Aorta (tissue), 5 donors: ENCODE measurements at regions of chr1 and their contacts with region 1.

Region 1: GRCh38 chr1:219385786-219386427 is 212.2 kb downstream of the LYPLAL1 start:
- DNase-seq: peak in 1 of 2 donors; percentile 51
- ATAC-seq: no peak
- H3K4me3 ChIP-seq: no peak overlapping the region
- H3K27ac ChIP-seq: no peak overlapping the region
- H3K4me1 ChIP-seq: peaks cover 0 to 2% of the 10 kb centered on the region in 2 donors
- H3K27me3 ChIP-seq: no peaks in the 10 kb centered on the region

Region 2: DNA sequence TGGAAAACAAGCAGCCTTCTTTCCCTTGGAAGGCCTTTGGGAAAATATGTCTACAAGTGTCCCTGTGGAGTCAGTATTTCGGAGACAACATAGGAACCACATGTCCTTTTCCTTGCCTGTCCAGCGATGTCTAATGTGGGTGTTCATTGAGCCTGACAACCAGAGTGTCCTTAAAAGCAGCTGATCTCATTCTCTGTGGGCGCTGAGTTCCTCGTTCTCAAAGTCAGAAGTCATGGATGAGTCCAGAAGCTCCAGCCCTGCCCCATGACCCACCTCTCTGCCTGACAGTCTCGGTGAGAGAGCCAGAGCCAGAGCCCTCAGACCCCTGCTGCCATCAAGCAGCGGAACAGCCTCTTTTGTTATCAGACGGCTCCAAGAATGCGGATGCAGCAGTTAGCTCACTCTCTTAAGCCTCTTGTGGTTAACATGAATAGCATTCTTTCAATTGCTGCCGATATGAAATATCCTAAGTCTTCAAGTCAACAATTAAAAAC is 711.6 kb before region 1 on chr1:
- intact Hi-C with region 1: loop called in 1 of 2 experiments (anchors 5 kb)
- DNase-seq: peak; percentile 33 to 56
- ATAC-seq: no peak
- H3K4me3 ChIP-seq: peak overlapping the region in 1 of 2 donors; percentile 41
- H3K27ac ChIP-seq: no peak overlapping the region
- H3K4me1 ChIP-seq: no peaks in the 10 kb centered on the region
- H3K27me3 ChIP-seq: no peaks in the 10 kb centered on the region

Region 3: GRCh38 chr1:219209578-219209977 is 176.3 kb before region 1 on chr1:
- intact Hi-C with region 1: loop called (anchors 5 to 10 kb)
- DNase-seq: no peak
- ATAC-seq: no peak
- H3K4me3 ChIP-seq: no peak overlapping the region
- H3K27ac ChIP-seq: no peak overlapping the region
- H3K4me1 ChIP-seq: no peaks in the 10 kb centered on the region
- H3K27me3 ChIP-seq: no peaks in the 10 kb centered on the region

Region 4: GRCh38 chr1:219215477-219215876 is 170.4 kb before region 1 on chr1:
- intact Hi-C with region 1: loop called in 1 of 2 experiments (anchors 10 kb)
- DNase-seq: no peak
- ATAC-seq: no peak
- H3K4me3 ChIP-seq: no peak overlapping the region
- H3K27ac ChIP-seq: no peak overlapping the region
- H3K4me1 ChIP-seq: no peaks in the 10 kb centered on the region
- H3K27me3 ChIP-seq: no peaks in the 10 kb centered on the region